ENCODE measurements at regions of chr7 and their contacts with region 1.

Region 1: DNA sequence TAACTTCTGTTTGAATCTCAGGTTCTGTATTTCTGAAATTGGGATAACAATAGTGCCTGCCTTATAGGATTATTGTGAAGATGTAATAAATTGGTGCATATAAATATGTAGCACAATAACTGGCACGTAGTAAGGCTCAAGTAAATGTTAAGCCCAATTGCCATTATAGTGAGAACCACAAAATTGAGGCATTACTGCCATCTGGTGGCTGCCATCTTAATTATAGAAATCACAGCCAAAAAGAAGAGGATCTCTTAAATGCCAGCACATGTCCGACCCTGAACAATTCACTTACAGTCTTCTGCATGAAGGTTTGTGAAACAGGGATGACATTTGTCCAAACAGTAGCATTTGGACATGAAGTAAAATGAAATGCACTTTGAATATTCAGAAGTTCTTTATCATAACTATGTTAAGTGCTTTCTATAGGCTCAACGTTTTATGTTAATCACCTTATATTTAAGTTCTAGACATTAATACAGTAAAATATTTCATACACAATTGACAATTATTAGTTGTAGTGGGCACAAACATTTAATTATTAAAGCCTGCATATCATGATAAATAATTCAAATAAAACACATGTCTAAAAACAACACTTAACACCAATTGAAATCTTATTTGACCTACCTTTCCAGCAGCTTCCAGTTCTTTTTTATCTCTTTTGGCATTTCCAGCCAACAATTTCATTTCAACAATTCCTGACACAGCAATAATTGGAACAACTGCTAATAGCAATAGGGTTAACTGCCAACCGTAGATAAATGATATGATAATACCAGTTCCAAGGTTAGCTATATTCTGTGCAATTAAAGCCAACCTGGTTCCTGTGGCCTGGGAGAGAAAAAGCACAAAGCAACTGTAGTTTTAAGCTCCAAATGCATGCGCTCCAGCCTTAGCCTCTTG is 58.5 kb downstream of the ABCB4 start:
- DNase-seq: peak; percentile 85
- H3K4me3 Mint-ChIP-seq: no peak overlapping the region
- H3K27ac Mint-ChIP-seq: no peak overlapping the region
- H3K4me1 Mint-ChIP-seq: no peaks in the 10 kb centered on the region
- H3K27me3 Mint-ChIP-seq: no peaks in the 10 kb centered on the region

Region 2: DNA sequence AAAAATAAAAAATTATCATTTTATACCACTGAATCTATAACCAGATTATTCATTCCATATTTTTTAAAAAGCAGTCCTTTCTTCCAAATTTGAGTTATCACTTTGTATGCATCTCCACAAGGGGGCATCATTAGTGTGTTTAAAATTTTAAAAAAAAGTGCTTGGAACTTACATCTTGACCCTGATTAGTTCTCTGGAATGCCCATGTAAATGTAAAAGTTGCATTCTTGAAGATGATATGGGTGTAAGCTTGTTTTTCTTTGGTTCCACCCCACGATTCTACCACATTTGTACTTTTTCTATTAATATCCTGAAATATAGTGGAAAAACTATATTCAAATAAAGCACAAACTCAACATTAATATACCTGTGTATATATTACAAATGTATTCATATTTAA is 502.4 kb before region 1 on chr7:
- CTCF ChIA-PET with region 1: interaction called, 8 read pairs
- intact Hi-C with region 1: loop called (anchors 1 kb)
- DNase-seq: no peak
- H3K4me3 Mint-ChIP-seq: no peak overlapping the region
- H3K27ac Mint-ChIP-seq: no peak overlapping the region
- H3K4me1 Mint-ChIP-seq: peaks cover 5% of the 10 kb centered on the region
- H3K27me3 Mint-ChIP-seq: no peaks in the 10 kb centered on the region

Region 3: GRCh38 chr7:86939197-86939814 is 477.6 kb before region 1 on chr7:
- CTCF ChIA-PET with region 1: interaction called, 4 read pairs
- intact Hi-C with region 1: loop called (anchors 1 kb)
- DNase-seq: peak; percentile 62
- H3K4me3 Mint-ChIP-seq: no peak overlapping the region
- H3K27ac Mint-ChIP-seq: no peak overlapping the region
- H3K4me1 Mint-ChIP-seq: no peaks in the 10 kb centered on the region
- H3K27me3 Mint-ChIP-seq: no peaks in the 10 kb centered on the region

Region 4: GRCh38 chr7:87312215-87312865 is 104.6 kb before region 1 on chr7:
- CTCF ChIA-PET with region 1: interaction called, 29 read pairs
- intact Hi-C with region 1: loop called (anchors 1 kb)
- DNase-seq: peak; percentile 58
- H3K4me3 Mint-ChIP-seq: no peak overlapping the region
- H3K27ac Mint-ChIP-seq: no peak overlapping the region
- H3K4me1 Mint-ChIP-seq: no peaks in the 10 kb centered on the region
- H3K27me3 Mint-ChIP-seq: no peaks in the 10 kb centered on the region

Region 5: GRCh38 chr7:87564289-87564963 is 147.5 kb after region 1 on chr7:
- CTCF ChIA-PET with region 1: no interaction called
- intact Hi-C with region 1: no loop called
- DNase-seq: peak; percentile 41
- H3K4me3 Mint-ChIP-seq: no peak overlapping the region
- H3K27ac Mint-ChIP-seq: no peak overlapping the region
- H3K4me1 Mint-ChIP-seq: peaks cover 4% of the 10 kb centered on the region
- H3K27me3 Mint-ChIP-seq: no peaks in the 10 kb centered on the region

Region 6: DNA sequence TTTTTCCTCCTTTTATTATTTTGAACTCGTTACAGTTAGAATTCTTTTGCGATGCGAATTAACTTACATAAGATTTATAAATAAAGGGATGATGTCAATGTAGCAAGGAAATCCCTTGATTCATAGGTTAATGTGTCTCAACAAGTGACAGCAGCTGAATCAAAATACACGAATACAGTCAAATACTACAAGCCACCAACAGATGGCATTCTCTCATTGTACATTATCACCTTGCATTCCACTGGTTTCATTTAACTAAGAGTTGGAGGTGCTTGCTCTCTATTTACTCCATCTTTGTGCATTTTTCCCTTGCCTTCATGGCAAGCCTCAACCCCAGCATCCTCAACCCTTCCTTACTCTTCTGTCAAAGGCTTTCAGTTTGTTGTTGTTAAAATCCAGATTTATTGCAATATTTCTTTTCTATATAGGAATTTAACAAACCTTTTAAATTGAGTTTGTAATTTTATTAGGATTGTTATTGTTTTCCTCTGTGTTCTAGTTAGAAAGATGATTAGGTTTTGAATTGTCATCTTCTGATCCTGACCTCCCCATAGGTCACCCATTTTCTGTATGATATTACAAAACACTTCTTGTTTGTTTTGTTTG is 381.0 kb after region 1 on chr7:
- CTCF ChIA-PET with region 1: interaction called, 11 read pairs
- intact Hi-C with region 1: no loop called
- DNase-seq: no peak
- H3K4me3 Mint-ChIP-seq: no peak overlapping the region
- H3K27ac Mint-ChIP-seq: no peak overlapping the region
- H3K4me1 Mint-ChIP-seq: no peaks in the 10 kb centered on the region
- H3K27me3 Mint-ChIP-seq: peaks cover under 1% of the 10 kb centered on the region

Measured in activated naive CD4-positive, alpha-beta T cell treated with anti-CD3 and anti-CD28 coated beads for 36 hours (primary cell).